ENCODE measurements at regions of chr2 and their contacts with region 1.

Region 1: GRCh38 chr2:85707304-85707703 is 13.1 kb downstream of the GNLY start:
- DNase-seq: peak in 11 of 14 experiments; percentile 21 to 87 (median 50)
- ATAC-seq: peak; percentile 80
- H3K4me3 ChIP-seq: no peak overlapping the region
- H3K4me3 Mint-ChIP-seq: no peak overlapping the region
- H3K27ac ChIP-seq: no peak overlapping the region
- H3K27ac Mint-ChIP-seq: no peak overlapping the region
- H3K4me1 ChIP-seq: peaks cover 14% of the 10 kb centered on the region
- H3K4me1 Mint-ChIP-seq: peaks cover 13% of the 10 kb centered on the region
- H3K27me3 ChIP-seq: peaks cover 0 to 4% of the 10 kb centered on the region in 2 experiments
- H3K27me3 Mint-ChIP-seq: peaks cover 13% of the 10 kb centered on the region
- CTCF ChIP-seq: peak; percentile 83

Region 2: DNA sequence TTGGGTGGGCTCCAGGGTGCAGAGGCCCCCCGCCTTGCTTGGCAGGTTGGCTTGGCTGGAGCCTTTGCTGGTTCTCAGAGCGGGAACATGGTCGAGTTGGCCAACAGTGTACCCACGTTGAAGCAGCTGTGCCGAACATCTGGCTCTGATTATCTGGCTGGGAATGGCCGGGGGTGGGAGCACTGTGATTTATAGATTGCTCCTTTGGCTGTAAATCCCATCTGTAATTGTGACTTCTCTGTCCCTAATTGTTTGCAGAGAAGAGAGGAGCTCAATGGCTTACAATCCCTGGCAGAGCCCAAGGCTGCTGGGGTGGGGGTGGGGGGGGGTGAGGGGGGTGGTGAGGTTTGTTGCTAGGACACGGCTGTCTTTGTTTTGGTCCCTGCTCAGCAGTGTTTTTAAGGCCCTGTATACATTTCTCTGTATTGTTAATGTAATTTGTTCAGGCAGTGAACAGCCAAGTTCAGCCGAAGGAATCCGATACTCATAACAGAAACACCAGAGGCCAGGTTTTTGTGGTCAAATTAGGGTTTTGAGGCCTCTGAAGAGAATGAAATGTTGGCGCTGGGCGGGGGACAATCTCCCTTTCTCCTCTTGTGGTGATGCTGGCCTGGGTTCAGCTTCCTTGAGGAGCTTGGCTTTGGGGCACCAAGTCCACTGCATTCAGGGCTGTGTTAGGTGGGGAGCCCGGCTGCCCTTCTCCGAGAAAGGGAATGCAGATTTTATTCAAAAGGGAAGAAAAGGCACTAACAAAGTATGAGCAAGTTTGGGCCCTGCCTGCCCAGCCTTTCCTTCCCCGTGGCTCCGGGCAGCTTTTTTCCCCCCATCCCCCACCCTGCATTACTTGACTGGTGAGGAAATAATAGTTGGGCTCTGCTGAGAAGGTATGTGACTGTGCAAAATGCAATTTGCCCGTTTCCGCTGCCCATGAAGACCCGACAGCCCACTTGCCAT is 491.6 kb before region 1 on chr2:
- CTCF ChIA-PET with region 1: no interaction called
- POLR2A ChIA-PET with region 1: no interaction called
- intact Hi-C with region 1: no loop called
- DNase-seq: no peak
- ATAC-seq: no peak
- H3K4me3 ChIP-seq: no peak overlapping the region
- H3K4me3 Mint-ChIP-seq: no peak overlapping the region
- H3K27ac ChIP-seq: no peak overlapping the region
- H3K27ac Mint-ChIP-seq: no peak overlapping the region
- H3K4me1 ChIP-seq: no peaks in the 10 kb centered on the region
- H3K4me1 Mint-ChIP-seq: no peaks in the 10 kb centered on the region
- H3K27me3 ChIP-seq: peaks cover 12 to 16% of the 10 kb centered on the region in 2 experiments
- H3K27me3 Mint-ChIP-seq: peaks cover 54% of the 10 kb centered on the region
- CTCF ChIP-seq: no peak

Region 3: DNA sequence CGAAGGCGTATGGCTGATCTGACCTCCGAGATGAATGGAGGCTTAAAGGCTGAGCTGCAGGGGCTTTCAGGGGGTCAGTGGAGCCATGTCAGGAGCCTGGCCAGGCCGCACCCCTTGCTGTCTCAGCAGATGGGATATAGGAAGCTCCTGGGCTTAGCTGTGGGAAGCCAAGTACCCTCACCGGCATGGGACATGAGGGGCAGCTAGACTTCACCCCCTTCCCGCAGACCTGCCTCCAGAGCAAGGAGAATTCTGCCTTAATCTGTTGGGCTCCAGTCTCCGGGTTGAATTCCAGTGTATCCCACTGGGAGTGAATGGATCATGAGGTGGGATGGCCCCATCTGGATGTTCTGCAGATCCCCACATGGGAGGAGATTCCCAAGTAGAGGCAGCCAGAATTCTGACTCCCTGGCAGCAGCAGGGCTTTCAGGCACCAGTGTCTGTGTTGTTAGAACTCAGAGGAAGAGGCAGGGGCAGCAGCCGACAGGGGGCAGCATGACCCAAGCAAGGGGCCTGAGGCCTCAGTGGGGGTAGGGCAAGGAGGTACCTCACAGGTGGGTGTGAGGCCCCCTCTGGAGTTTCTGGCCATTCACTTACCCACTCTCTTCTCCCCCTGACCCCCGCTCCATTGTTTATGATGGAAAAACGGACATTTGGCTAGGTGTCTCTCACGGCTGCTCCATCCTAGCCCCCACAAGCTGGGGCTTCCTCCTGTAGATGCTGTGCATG is 316.2 kb before region 1 on chr2:
- CTCF ChIA-PET with region 1: no interaction called
- POLR2A ChIA-PET with region 1: no interaction called
- intact Hi-C with region 1: loop called (anchors 2 to 10 kb)
- DNase-seq: peak; percentile 66 to 85 (median 72)
- ATAC-seq: peak; percentile 69
- H3K4me3 ChIP-seq: no peak overlapping the region
- H3K4me3 Mint-ChIP-seq: no peak overlapping the region
- H3K27ac ChIP-seq: no peak overlapping the region
- H3K27ac Mint-ChIP-seq: peak overlapping the region; percentile 44
- H3K4me1 ChIP-seq: peaks cover 15% of the 10 kb centered on the region
- H3K4me1 Mint-ChIP-seq: peaks cover 14% of the 10 kb centered on the region
- H3K27me3 ChIP-seq: no peaks in the 10 kb centered on the region
- H3K27me3 Mint-ChIP-seq: no peaks in the 10 kb centered on the region
- CTCF ChIP-seq: peak; percentile 77

Region 4: DNA sequence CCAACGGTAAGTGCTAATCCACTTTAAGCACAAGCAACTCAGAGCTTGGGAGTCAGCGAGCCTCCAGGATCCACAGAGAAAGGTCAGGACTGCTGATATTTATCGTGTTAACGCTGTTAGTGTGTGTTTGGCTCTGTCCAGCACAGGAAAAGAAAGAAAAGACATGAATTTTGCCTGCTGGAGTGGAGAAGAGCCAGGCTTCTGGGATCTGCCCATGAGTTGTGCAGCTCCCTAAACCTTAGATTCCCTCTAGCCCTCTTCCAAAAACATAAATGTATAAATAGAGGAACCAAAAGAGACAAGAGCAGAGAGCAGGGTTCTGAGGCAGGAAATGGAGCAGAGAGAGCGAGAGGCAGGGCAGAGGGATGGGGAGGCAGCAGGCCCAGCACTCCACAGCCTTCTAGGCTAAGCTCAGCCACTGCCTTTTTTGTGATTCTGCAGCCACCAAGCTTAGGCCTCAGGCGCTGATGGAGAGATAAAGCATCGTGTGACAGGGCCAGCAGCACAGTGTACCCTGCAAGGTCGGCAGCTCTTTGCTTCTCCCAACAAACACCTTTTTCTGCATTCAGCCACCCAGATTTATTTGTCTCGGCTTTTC is 182.9 kb before region 1 on chr2:
- CTCF ChIA-PET with region 1: no interaction called
- POLR2A ChIA-PET with region 1: no interaction called
- intact Hi-C with region 1: no loop called
- DNase-seq: no peak
- ATAC-seq: no peak
- H3K4me3 ChIP-seq: no peak overlapping the region
- H3K4me3 Mint-ChIP-seq: no peak overlapping the region
- H3K27ac ChIP-seq: no peak overlapping the region
- H3K27ac Mint-ChIP-seq: no peak overlapping the region
- H3K4me1 ChIP-seq: peaks cover 6% of the 10 kb centered on the region
- H3K4me1 Mint-ChIP-seq: no peaks in the 10 kb centered on the region
- H3K27me3 ChIP-seq: no peaks in the 10 kb centered on the region
- H3K27me3 Mint-ChIP-seq: no peaks in the 10 kb centered on the region
- CTCF ChIP-seq: no peak

Region 5: DNA sequence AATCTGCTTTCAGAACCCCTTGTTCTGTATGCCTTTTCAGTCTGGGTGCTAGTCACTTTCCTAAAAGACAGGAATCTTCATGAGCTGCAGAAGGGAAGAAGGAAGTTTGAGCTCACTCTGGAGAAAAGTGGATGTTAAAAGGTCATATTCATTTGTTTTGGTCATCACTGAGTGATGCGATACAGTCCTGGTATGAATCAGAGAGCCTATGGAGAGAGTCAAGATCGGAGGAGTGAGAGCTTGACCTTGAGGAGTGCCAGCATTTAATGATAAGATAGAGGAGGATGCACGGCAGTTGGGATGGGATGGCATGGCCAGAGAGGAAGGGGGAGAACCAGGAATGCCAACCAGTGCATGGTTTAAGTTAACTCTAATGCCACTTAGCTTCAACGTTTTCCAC is 71.7 kb before region 1 on chr2:
- CTCF ChIA-PET with region 1: interaction called, 9 read pairs
- POLR2A ChIA-PET with region 1: no interaction called
- intact Hi-C with region 1: loop called (anchors 1 to 2 kb)
- DNase-seq: no peak
- ATAC-seq: no peak
- H3K4me3 ChIP-seq: no peak overlapping the region
- H3K4me3 Mint-ChIP-seq: no peak overlapping the region
- H3K27ac ChIP-seq: no peak overlapping the region
- H3K27ac Mint-ChIP-seq: no peak overlapping the region
- H3K4me1 ChIP-seq: peaks cover 6% of the 10 kb centered on the region
- H3K4me1 Mint-ChIP-seq: peaks cover 11% of the 10 kb centered on the region
- H3K27me3 ChIP-seq: no peaks in the 10 kb centered on the region
- H3K27me3 Mint-ChIP-seq: no peaks in the 10 kb centered on the region
- CTCF ChIP-seq: no peak

Region 6: DNA sequence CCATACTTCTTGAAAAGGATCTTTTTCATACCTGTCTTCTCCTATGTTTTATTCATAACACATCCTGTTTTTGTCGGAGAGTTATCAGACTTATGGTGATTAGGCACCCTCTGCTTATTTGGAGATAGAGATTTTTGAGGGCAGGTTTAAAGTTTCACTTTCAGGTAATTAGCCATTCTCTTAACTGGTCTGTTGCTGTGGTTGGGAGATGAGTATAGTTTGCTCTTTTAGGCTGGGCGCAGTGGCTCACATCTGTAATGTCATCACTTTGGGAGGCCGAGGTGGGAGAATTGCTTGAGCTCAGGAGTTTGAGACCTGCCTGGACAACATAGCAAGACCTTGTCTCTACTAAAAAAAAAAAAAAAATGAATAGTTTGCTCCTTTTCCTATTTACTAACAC is 64.6 kb before region 1 on chr2:
- CTCF ChIA-PET with region 1: interaction called, 9 read pairs
- POLR2A ChIA-PET with region 1: no interaction called
- intact Hi-C with region 1: loop called (anchors 1 to 2 kb)
- DNase-seq: peak in 1 of 14 experiments; percentile 24
- ATAC-seq: no peak
- H3K4me3 ChIP-seq: no peak overlapping the region
- H3K4me3 Mint-ChIP-seq: no peak overlapping the region
- H3K27ac ChIP-seq: no peak overlapping the region
- H3K27ac Mint-ChIP-seq: peak overlapping the region; percentile 59
- H3K4me1 ChIP-seq: peaks cover 1% of the 10 kb centered on the region
- H3K4me1 Mint-ChIP-seq: peaks cover 6% of the 10 kb centered on the region
- H3K27me3 ChIP-seq: no peaks in the 10 kb centered on the region
- H3K27me3 Mint-ChIP-seq: no peaks in the 10 kb centered on the region
- CTCF ChIP-seq: no peak

Region 7: GRCh38 chr2:85678794-85679672 is 28.3 kb before region 1 on chr2:
- CTCF ChIA-PET with region 1: interaction called, 4 read pairs
- POLR2A ChIA-PET with region 1: no interaction called
- intact Hi-C with region 1: loop called in 1 of 2 experiments (anchors 1 kb)
- DNase-seq: peak; percentile 52 to 85 (median 70)
- ATAC-seq: peak; percentile 99
- H3K4me3 ChIP-seq: no peak overlapping the region
- H3K4me3 Mint-ChIP-seq: no peak overlapping the region
- H3K27ac ChIP-seq: no peak overlapping the region
- H3K27ac Mint-ChIP-seq: no peak overlapping the region
- H3K4me1 ChIP-seq: peaks cover 11% of the 10 kb centered on the region
- H3K4me1 Mint-ChIP-seq: no peaks in the 10 kb centered on the region
- H3K27me3 ChIP-seq: no peaks in the 10 kb centered on the region
- H3K27me3 Mint-ChIP-seq: no peaks in the 10 kb centered on the region
- CTCF ChIP-seq: peak; percentile 99

Region 8: DNA sequence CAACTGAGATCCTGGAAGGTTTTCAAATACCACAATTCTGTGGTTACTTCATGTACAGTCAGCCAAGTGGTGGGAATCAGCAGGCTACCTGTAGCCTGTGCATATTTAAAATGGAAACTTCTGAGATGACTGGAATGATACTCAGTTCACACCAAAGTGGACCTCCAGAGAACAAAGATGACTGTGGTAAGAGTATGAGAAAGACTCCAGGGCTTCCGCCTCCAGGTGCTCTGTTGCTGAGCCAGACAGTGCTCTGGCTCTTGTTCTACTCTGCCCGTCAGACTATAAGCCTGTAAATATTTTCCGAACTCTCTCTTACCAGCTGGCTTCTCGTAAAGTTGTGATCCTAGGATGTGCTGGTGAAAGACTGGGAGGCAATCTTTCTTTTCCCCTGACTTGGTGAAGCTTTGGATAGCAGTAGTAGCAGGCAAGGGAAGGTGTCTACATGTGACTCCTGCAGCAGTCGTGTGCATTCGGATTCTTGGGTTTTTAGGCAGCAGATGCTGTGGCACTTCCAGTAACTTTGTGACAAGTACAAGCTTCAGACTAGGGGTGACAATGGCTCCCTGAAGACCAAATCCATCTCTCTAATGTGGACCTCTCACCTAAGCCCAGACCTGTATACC is 158.3 kb after region 1 on chr2:
- CTCF ChIA-PET with region 1: no interaction called
- POLR2A ChIA-PET with region 1: no interaction called
- intact Hi-C with region 1: no loop called
- DNase-seq: peak in 2 of 14 experiments; percentile 17 to 19
- ATAC-seq: peak; percentile 36
- H3K4me3 ChIP-seq: no peak overlapping the region
- H3K4me3 Mint-ChIP-seq: no peak overlapping the region
- H3K27ac ChIP-seq: peak overlapping the region in 1 of 2 donors; percentile 10
- H3K27ac Mint-ChIP-seq: peak overlapping the region; percentile 56
- H3K4me1 ChIP-seq: peaks cover 34% of the 10 kb centered on the region
- H3K4me1 Mint-ChIP-seq: peaks cover 63% of the 10 kb centered on the region
- H3K27me3 ChIP-seq: no peaks in the 10 kb centered on the region
- H3K27me3 Mint-ChIP-seq: no peaks in the 10 kb centered on the region
- CTCF ChIP-seq: no peak

Measured in CD4-positive, alpha-beta T cell (primary cell).